Dorsolateral prefrontal cortex (tissue), 120 donors: ENCODE measurements at regions of chr16 and their contacts with region 1.

Region 1: GRCh38 chr16:89873972-89874689 is 739 bp downstream of the TCF25 start:
- DNase-seq: peak; percentile 94 to 97 (median 94)
- H3K4me3 ChIP-seq: peak overlapping the region; percentile 59 to 99 (median 84)
- H3K27ac ChIP-seq: peak overlapping the region; percentile 86 to 100 (median 99)
- H3K27me3 ChIP-seq: no peaks in the 10 kb centered on the region
- CTCF ChIP-seq: no peak

Region 2: GRCh38 chr16:89815639-89816348 is 58.3 kb before region 1 on chr16:
- intact Hi-C with region 1: loop called (anchors 5 to 10 kb)
- DNase-seq: no peak
- H3K4me3 ChIP-seq: peak overlapping the region; percentile 15 to 91 (median 77)
- H3K27ac ChIP-seq: peak overlapping the region in 1 of 59 donors; percentile 88
- H3K27me3 ChIP-seq: no peaks in the 10 kb centered on the region
- CTCF ChIP-seq: no peak

Region 3: DNA sequence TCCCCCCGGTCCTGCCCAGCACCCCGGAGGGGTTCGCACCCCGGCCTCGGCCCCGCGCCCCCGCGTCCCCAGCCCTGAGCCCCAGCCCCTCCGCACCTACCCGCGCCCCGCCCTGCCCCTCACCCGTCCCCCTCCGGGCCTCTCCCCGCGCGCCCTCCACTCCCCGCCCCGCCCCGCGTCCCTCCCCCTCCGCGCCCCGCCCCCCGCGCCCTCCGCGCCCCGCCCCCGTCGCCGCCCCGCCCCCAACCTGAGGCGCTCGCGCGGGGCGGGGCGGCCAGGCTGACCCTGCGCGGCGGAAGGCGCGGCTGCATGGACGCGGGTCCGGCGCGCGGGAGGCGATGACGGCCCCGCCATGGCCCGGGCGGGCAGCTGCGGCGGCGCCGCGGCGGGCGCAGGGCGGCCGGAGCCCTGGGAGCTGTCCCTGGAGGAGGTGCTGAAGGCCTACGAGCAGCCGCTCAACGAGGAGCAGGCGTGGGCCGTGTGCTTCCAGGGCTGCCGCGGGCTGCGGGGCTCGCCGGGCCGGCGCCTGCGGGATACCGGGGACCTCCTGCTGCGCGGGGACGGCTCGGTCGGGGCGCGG is 45.8 kb before region 1 on chr16 and contains the start of gene SPIRE2:
- intact Hi-C with region 1: loop called in 1 of 2 experiments (anchors 10 kb)
- DNase-seq: peak in 6 of 10 donors; percentile 36 to 75 (median 56)
- H3K4me3 ChIP-seq: peak within 1 kb of the TSS; percentile 41 to 76 (median 64)
- H3K27ac ChIP-seq: peak within 1 kb of the TSS in 55 of 59 donors; percentile 39 to 92 (median 83)
- H3K27me3 ChIP-seq: no peaks in the 10 kb centered on the region
- CTCF ChIP-seq: no peak
- total RNA-seq, gene SPIRE2: 18.5 to 66.3 (median 40.6) TPM

Region 4: GRCh38 chr16:89909777-89910716 is 35.9 kb after region 1 on chr16:
- intact Hi-C with region 1: loop called (anchors 5 kb)
- DNase-seq: peak; percentile 81 to 90 (median 84)
- H3K4me3 ChIP-seq: peak overlapping the region in 24 of 59 donors; percentile 7 to 47 (median 24)
- H3K27ac ChIP-seq: peak overlapping the region in 58 of 59 donors; percentile 33 to 88 (median 81)
- H3K27me3 ChIP-seq: no peaks in the 10 kb centered on the region
- CTCF ChIP-seq: peak; percentile 73 to 96 (median 90)